Caco-2 (cell line): ENCODE measurements at regions of chr10 and their contacts with region 1.

Region 1: DNA sequence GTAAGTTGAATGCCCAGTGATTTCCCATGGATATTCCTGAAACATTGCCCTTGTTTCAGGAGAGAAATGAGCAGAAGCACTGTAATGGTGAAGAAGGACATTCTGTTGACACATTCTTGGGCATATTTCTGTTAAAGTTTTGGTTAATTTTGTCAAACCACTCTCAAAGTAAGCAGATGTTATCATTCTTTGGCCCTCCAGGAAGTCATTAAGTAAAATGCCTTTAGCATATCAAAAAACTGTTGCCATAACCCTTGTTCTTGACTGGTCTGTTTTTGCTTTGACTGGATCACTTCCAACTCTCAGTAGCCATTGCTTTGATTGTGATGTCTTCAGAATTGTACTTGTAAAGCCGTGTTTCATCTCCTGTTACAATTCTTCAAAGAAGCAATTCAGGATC is 404.4 kb upstream of the LRRTM3 start:
- DNase-seq: no peak
- H3K4me3 ChIP-seq: no peak overlapping the region
- H3K4me3 Mint-ChIP-seq: no peak overlapping the region
- H3K27ac Mint-ChIP-seq: no peak overlapping the region
- H3K4me1 ChIP-seq: no peaks in the 10 kb centered on the region
- H3K4me1 Mint-ChIP-seq: no peaks in the 10 kb centered on the region
- H3K27me3 ChIP-seq: no peaks in the 10 kb centered on the region
- H3K27me3 Mint-ChIP-seq: no peaks in the 10 kb centered on the region
- CTCF ChIP-seq: no peak

Region 2: DNA sequence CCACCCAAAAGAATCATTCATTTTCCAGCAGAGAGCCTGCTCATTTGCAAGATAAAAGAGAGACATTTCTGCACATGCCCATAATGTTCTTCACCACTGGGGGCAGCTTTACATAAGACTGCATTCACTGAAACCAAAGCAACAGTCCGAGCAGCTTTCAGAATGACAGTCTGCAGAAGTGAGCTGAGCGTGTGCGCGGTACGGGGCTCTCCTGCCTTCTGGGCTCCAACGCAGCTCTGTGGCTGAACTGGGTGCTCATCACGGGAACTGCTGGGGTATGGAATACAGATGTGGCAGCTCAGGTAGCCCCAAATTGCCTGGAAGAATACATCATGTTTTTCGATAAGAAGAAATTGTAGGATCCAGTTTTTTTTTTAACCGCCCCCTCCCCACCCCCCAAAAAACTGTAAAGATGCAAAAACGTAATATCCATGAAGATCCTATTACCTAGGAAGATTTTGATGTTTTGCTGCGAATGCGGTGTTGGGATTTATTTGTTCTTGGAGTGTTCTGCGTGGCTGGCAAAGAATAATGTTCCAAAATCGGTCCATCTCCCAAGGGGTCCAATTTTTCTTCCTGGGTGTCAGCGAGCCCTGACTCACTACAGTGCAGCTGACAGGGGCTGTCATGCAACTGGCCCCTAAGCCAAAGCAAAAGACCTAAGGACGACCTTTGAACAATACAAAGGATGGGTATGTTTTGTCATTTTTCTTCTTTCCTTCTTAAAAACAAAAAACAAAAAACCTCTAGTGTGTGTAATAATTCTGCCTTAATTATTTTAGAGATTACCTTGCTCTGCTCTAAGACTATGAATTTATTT is 404.6 kb after region 1 on chr10 and contains the start of gene LRRTM3:
- CTCF ChIA-PET with region 1: no interaction called
- POLR2A ChIA-PET with region 1: no interaction called
- intact Hi-C with region 1: loop called (anchors 10 kb)
- DNase-seq: peak; percentile 73 to 77
- H3K4me3 ChIP-seq: no peak within 1 kb of the TSS
- H3K4me3 Mint-ChIP-seq: no peak within 1 kb of the TSS
- H3K27ac Mint-ChIP-seq: no peak within 1 kb of the TSS
- H3K4me1 ChIP-seq: no peaks in the 10 kb centered on the region
- H3K4me1 Mint-ChIP-seq: no peaks in the 10 kb centered on the region
- H3K27me3 ChIP-seq: no peaks in the 10 kb centered on the region; the same call in 1 of the 2 replicates
- H3K27me3 Mint-ChIP-seq: peaks cover 19% of the 10 kb centered on the region
- CTCF ChIP-seq: peak; percentile 77 to 95
- total RNA-seq, gene LRRTM3: not detected in 2 replicates